ENCODE measurements at regions of chr3 and their contacts with region 1.

Region 1: DNA sequence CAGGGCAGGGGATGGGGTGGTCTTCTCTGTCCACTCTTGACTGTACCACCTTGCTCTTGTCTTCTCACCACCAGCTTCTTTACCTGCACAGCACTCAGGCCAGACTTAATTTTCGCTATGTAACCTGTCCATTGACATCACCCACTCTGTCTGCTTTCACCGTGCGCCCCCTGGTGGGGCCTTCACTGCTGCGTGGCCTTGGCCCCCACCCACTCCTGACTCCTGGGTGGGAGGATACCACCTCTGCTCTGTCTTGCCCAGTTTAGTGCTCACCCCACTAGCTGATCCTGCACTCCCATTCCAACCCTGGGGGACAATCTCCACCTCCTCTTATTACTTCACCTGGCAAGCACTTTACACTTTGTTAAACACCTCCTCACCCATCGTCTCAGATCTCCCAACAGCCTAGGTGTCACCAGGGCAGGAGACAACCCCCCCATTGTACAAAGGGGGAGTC is 17.7 kb downstream of the PTH1R start:
- DNase-seq: peak; percentile 32
- H3K4me3 ChIP-seq: no peak overlapping the region
- H3K27ac ChIP-seq: no peak overlapping the region
- H3K4me1 ChIP-seq: peaks cover under 1% of the 10 kb centered on the region
- H3K27me3 ChIP-seq: no peaks in the 10 kb centered on the region
- CTCF ChIP-seq: peak; percentile 75

Region 2: GRCh38 chr3:46705022-46705530 is 190.2 kb before region 1 on chr3:
- CTCF ChIA-PET with region 1: no interaction called
- POLR2A ChIA-PET with region 1: no interaction called
- intact Hi-C with region 1: loop called (anchors 1 kb)
- DNase-seq: peak; percentile 58
- H3K4me3 ChIP-seq: no peak overlapping the region
- H3K27ac ChIP-seq: no peak overlapping the region
- H3K4me1 ChIP-seq: no peaks in the 10 kb centered on the region
- H3K27me3 ChIP-seq: no peaks in the 10 kb centered on the region
- CTCF ChIP-seq: peak; percentile 75

Region 3: GRCh38 chr3:46866720-46867549 is 28.3 kb before region 1 on chr3:
- CTCF ChIA-PET with region 1: interaction called, 3 read pairs
- POLR2A ChIA-PET with region 1: no interaction called
- intact Hi-C with region 1: loop called (anchors 2 kb)
- DNase-seq: peak; percentile 36
- H3K4me3 ChIP-seq: no peak overlapping the region
- H3K27ac ChIP-seq: no peak overlapping the region
- H3K4me1 ChIP-seq: no peaks in the 10 kb centered on the region
- H3K27me3 ChIP-seq: no peaks in the 10 kb centered on the region
- CTCF ChIP-seq: peak; percentile 72

Region 4: GRCh38 chr3:47002171-47003055 is 107.2 kb after region 1 on chr3:
- CTCF ChIA-PET with region 1: no interaction called
- POLR2A ChIA-PET with region 1: no interaction called
- intact Hi-C with region 1: no loop called
- DNase-seq: no peak
- H3K4me3 ChIP-seq: no peak overlapping the region
- H3K27ac ChIP-seq: no peak overlapping the region
- H3K4me1 ChIP-seq: no peaks in the 10 kb centered on the region
- H3K27me3 ChIP-seq: no peaks in the 10 kb centered on the region
- CTCF ChIP-seq: peak; percentile 42